MCF 10A (cell line): ENCODE measurements at regions of chr2 and their contacts with region 1.

Region 1: GRCh38 chr2:173075781-173076580 is at the start of gene MAP3K20:
- DNase-seq: peak; percentile 72
- H3K4me3 Mint-ChIP-seq: peak within 1 kb of the TSS; percentile 82
- H3K27ac Mint-ChIP-seq: peak within 1 kb of the TSS; percentile 95
- H3K4me1 Mint-ChIP-seq: peaks cover 31% of the 10 kb centered on the region
- H3K27me3 Mint-ChIP-seq: no peaks in the 10 kb centered on the region
- CTCF ChIP-seq: peak; percentile 40
- total RNA-seq, gene MAP3K20: 134 and 150 TPM in 2 replicates

Region 2: GRCh38 chr2:172031536-172031935 is 1044.4 kb before region 1 on chr2:
- CTCF ChIA-PET with region 1: no interaction called
- POLR2A ChIA-PET with region 1: no interaction called
- intact Hi-C with region 1: no loop called
- DNase-seq: no peak
- H3K4me3 Mint-ChIP-seq: no peak overlapping the region
- H3K27ac Mint-ChIP-seq: no peak overlapping the region
- H3K4me1 Mint-ChIP-seq: no peaks in the 10 kb centered on the region
- H3K27me3 Mint-ChIP-seq: no peaks in the 10 kb centered on the region
- CTCF ChIP-seq: no peak

Region 3: DNA sequence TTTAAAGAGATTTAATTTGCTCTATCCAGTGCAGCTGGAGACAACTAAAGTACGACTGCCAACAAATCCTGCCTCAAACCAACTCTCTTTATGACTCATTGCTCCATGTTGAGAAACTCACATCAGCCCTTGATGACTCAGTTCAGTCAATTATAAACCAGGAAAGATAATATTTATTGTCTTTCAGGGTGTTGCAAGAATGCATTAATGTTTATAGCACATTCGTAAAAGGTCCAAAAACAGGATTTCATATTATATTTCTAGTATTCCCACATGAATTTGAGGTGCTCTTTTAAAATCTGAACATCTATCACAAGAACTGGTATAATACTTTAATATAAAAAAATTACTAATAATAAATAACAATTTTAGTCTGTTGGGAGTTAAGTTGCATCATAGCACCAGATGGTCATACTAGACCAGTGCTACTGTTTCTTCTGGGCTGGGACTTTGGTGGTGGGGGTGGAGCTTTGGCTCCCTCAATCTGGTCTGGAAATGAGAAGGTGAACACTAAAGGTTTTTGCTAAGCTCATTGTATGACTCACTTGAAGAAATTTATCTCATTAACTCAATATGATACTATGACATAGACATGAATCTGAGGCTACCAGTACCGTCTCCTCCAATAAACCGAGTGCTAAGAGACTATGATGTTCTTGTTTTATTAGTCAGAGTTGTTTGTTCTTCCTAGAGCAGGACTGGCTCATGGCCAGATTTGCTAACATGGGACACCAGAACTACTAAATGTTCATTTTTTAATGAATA is 26.9 kb before region 1 on chr2:
- CTCF ChIA-PET with region 1: interaction called, 3 read pairs
- POLR2A ChIA-PET with region 1: interaction called, 55 read pairs
- intact Hi-C with region 1: loop called (anchors 1 kb)
- DNase-seq: peak; percentile 98
- H3K4me3 Mint-ChIP-seq: peak overlapping the region; percentile 62
- H3K27ac Mint-ChIP-seq: peak overlapping the region; percentile 98
- H3K4me1 Mint-ChIP-seq: peaks cover 32% of the 10 kb centered on the region
- H3K27me3 Mint-ChIP-seq: no peaks in the 10 kb centered on the region
- CTCF ChIP-seq: no peak

Region 4: DNA sequence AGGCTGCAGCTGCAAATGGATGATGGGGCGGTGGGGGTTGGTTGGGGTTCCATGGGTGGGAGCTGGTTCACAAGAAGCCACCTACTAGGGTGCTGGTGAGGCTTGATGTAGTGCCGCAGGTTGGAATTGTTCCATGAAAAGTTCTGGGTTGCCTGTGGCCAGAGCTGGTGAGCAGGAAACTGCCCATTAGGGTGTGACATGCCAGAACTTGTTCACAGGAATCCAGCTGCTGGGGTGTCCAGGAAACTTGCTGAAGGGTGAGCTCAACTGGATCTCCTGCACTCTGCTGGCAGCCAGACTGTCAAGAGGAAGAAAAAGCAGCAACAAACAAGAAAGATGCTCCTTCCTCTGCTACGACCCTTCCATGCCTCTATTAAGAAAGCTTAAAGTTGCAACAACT is 48.5 kb after region 1 on chr2:
- CTCF ChIA-PET with region 1: interaction called, 5 read pairs
- POLR2A ChIA-PET with region 1: interaction called, 188 read pairs
- intact Hi-C with region 1: loop called (anchors 5 kb)
- DNase-seq: peak; percentile 94
- H3K4me3 Mint-ChIP-seq: peak overlapping the region; percentile 43
- H3K27ac Mint-ChIP-seq: peak overlapping the region; percentile 89
- H3K4me1 Mint-ChIP-seq: peaks cover 58% of the 10 kb centered on the region
- H3K27me3 Mint-ChIP-seq: no peaks in the 10 kb centered on the region
- CTCF ChIP-seq: no peak

Region 5: GRCh38 chr2:173159794-173160463 is 83.9 kb after region 1 on chr2:
- CTCF ChIA-PET with region 1: interaction called, 5 read pairs
- POLR2A ChIA-PET with region 1: interaction called, 35 read pairs
- intact Hi-C with region 1: no loop called
- DNase-seq: peak; percentile 100
- H3K4me3 Mint-ChIP-seq: peak overlapping the region; percentile 68
- H3K27ac Mint-ChIP-seq: peak overlapping the region; percentile 93
- H3K4me1 Mint-ChIP-seq: peaks cover 46% of the 10 kb centered on the region
- H3K27me3 Mint-ChIP-seq: no peaks in the 10 kb centered on the region
- CTCF ChIP-seq: no peak

Region 6: GRCh38 chr2:173210270-173211196 is 134.6 kb after region 1 on chr2:
- CTCF ChIA-PET with region 1: interaction called, 10 read pairs
- POLR2A ChIA-PET with region 1: interaction called, 41 read pairs
- intact Hi-C with region 1: loop called (anchors 1 kb)
- DNase-seq: peak; percentile 94
- H3K4me3 Mint-ChIP-seq: no peak overlapping the region
- H3K27ac Mint-ChIP-seq: peak overlapping the region; percentile 93
- H3K4me1 Mint-ChIP-seq: peaks cover 9% of the 10 kb centered on the region
- H3K27me3 Mint-ChIP-seq: no peaks in the 10 kb centered on the region
- CTCF ChIP-seq: peak; percentile 84

Region 7: DNA sequence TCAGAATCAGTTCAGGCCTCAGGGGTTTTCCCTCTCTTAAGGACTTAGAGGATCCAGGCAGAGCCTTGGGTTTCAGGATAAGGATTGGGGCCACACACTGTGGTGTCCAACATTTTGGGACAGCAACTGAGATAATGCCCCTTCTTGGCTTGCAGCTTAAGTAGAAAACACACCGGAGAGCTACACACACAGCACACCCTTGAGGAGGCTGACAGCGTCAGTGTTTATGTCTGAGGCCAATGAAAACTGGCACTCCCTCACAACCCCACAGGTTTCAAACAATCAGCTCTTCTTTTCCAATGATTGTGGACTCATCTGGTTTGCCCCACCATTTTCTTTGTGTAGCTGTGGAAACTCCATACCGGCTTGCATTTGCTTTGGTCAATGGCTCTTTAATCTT is 536.4 kb after region 1 on chr2:
- CTCF ChIA-PET with region 1: no interaction called
- POLR2A ChIA-PET with region 1: no interaction called
- intact Hi-C with region 1: no loop called
- DNase-seq: no peak
- H3K4me3 Mint-ChIP-seq: no peak overlapping the region
- H3K27ac Mint-ChIP-seq: no peak overlapping the region
- H3K4me1 Mint-ChIP-seq: no peaks in the 10 kb centered on the region
- H3K27me3 Mint-ChIP-seq: no peaks in the 10 kb centered on the region
- CTCF ChIP-seq: no peak

Region 8: GRCh38 chr2:173644146-173644545 is 568.2 kb after region 1 on chr2:
- CTCF ChIA-PET with region 1: no interaction called
- POLR2A ChIA-PET with region 1: no interaction called
- intact Hi-C with region 1: no loop called
- DNase-seq: peak; percentile 59
- H3K4me3 Mint-ChIP-seq: no peak overlapping the region
- H3K27ac Mint-ChIP-seq: no peak overlapping the region
- H3K4me1 Mint-ChIP-seq: peaks cover 15% of the 10 kb centered on the region
- H3K27me3 Mint-ChIP-seq: no peaks in the 10 kb centered on the region
- CTCF ChIP-seq: no peak